Dorsolateral prefrontal cortex (tissue), 120 donors: ENCODE measurements at regions of chr13 and their contacts with region 1.

Region 1: GRCh38 chr13:36346222-36347083 is at the start of gene SPART:
- DNase-seq: peak; percentile 91 to 97 (median 94)
- H3K4me3 ChIP-seq: peak within 1 kb of the TSS; percentile 53 to 94 (median 82)
- H3K27ac ChIP-seq: peak within 1 kb of the TSS; percentile 90 to 100 (median 99)
- H3K27me3 ChIP-seq: no peaks in the 10 kb centered on the region
- CTCF ChIP-seq: peak in 55 of 56 donors; percentile 90 to 99 (median 98)
- total RNA-seq, gene SPART: 62.9 to 138 (median 86.2) TPM

Region 2: GRCh38 chr13:35025343-35025742 is 1321.1 kb before region 1 on chr13:
- intact Hi-C with region 1: no loop called
- DNase-seq: no peak
- H3K4me3 ChIP-seq: no peak overlapping the region
- H3K27ac ChIP-seq: no peak overlapping the region
- H3K27me3 ChIP-seq: no peaks in the 10 kb centered on the region
- CTCF ChIP-seq: no peak

Region 3: GRCh38 chr13:36282818-36283445 is 63.5 kb before region 1 on chr13:
- intact Hi-C with region 1: loop called in 1 of 2 experiments (anchors 5 kb)
- DNase-seq: no peak
- H3K4me3 ChIP-seq: no peak overlapping the region
- H3K27ac ChIP-seq: no peak overlapping the region
- H3K27me3 ChIP-seq: no peaks in the 10 kb centered on the region
- CTCF ChIP-seq: peak; percentile 65 to 95 (median 85)

Region 4: DNA sequence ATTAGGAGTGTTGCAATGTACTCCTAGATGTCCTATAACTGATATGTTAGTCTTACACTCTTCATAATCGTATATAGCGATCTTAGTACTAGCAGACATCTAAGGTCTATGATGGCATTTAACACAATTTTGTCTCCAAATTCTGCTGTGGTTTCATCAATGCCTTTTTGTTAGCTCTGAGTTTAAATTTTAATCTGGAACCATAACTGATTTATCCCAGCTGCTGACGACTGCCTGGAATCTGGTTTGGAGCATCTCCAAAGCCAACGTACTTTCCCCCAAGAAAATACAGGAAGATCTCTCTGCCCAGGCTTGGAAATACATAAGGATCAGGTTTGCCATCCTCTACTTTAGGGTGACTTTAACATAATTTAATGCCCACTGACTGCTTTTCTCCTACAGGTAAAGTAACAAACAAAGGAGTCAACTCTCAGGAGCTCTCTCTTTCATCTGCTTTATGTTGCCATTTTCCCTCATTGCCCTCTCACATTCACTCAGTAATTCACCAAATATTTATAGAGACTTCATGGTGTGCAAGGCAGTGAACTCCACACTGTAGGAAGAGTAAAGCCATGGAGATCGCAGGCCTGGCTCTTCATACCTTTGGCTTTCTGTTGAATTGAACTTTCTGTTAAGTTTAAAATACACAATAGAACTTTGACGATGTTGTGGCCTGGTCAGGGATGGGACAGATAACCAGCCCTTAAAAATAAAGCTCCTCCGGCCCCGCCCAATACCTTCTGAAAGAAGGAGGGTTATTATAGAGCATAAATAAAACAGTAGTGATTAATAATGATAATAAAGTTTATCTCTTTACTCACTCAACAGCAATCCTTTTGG is 23.0 kb after region 1 on chr13:
- intact Hi-C with region 1: loop called in 1 of 2 experiments (anchors 1 kb)
- DNase-seq: no peak
- H3K4me3 ChIP-seq: peak overlapping the region; percentile 22 to 74 (median 50)
- H3K27ac ChIP-seq: peak overlapping the region; percentile 61 to 97 (median 91)
- H3K27me3 ChIP-seq: no peaks in the 10 kb centered on the region
- CTCF ChIP-seq: no peak